ENCODE measurements at regions of chr17 and their contacts with region 1.

Region 1: DNA sequence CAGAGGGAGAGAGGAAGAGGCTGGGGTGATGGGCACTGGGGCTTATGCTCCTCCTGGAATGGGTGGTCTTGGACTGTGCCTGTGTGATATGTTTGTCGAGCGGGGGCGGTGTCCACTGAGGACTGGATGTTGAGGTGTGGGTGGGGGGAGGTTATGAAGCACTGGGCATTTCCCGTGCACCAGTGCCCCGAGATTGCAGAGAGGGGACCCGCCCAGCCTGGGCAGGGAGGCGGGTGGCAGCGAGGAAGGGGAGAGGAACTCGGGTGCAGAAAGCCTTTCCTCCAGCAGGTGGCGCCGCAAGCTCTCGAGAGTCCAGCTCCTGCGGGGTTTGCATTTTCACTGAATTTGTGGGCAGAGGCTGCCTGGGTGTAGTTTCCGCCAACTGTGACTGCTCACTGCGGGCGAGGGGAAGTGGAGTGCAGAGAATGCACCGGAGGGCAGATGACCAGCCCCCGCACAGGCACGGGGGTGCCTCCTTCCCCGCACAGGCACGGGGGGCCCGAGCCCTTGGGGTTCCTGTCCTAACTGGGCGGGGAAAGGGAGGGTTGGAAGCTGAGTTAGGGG is 190.6 kb downstream of the SEC14L1 start:
- DNase-seq: peak; percentile 92
- H3K4me3 Mint-ChIP-seq: peak overlapping the region; percentile 70
- H3K27ac Mint-ChIP-seq: peak overlapping the region; percentile 86
- H3K4me1 Mint-ChIP-seq: peaks cover 38% of the 10 kb centered on the region
- H3K27me3 Mint-ChIP-seq: no peaks in the 10 kb centered on the region

Region 2: DNA sequence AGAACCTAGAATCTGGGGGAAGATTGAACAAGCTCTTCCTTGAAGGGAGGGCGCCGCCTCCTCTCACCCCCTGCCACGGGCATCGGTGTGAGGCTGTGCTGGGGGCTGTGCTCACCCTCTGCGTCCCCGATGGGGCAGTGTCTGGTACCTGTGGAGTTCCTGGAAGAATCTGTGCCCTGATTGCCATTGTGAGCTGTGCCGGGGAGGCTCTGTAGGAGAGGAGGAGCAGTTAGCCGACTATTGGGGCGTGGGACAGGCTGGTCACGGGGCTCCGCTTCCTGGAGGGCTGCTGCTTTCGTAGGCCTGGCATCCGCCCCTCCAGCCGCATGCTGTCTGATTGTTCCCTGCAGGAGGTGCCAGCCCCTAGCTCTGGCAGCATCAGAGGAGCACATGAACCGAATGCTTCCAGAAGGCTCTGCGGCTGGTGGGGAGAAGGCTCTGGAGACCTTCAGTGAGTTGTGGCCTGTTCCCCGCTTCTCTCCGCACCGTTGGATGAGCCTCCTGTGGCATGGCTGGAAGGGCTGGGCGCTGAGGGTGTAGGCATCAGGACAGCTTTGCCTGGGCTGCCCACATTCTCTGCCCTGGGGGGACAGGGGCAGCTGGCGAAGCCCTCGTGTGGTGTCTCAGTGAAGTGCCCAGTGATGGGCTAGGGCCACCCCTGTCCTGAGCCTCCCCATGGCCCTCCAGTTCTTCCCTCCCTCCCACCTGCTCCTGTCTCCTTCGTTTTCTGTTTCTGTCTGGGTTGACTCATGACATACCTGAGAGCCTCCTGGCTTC is 103.7 kb before region 1 on chr17:
- intact Hi-C with region 1: no loop called
- DNase-seq: no peak
- H3K4me3 Mint-ChIP-seq: no peak overlapping the region
- H3K27ac Mint-ChIP-seq: no peak overlapping the region
- H3K4me1 Mint-ChIP-seq: no peaks in the 10 kb centered on the region
- H3K27me3 Mint-ChIP-seq: no peaks in the 10 kb centered on the region

Region 3: DNA sequence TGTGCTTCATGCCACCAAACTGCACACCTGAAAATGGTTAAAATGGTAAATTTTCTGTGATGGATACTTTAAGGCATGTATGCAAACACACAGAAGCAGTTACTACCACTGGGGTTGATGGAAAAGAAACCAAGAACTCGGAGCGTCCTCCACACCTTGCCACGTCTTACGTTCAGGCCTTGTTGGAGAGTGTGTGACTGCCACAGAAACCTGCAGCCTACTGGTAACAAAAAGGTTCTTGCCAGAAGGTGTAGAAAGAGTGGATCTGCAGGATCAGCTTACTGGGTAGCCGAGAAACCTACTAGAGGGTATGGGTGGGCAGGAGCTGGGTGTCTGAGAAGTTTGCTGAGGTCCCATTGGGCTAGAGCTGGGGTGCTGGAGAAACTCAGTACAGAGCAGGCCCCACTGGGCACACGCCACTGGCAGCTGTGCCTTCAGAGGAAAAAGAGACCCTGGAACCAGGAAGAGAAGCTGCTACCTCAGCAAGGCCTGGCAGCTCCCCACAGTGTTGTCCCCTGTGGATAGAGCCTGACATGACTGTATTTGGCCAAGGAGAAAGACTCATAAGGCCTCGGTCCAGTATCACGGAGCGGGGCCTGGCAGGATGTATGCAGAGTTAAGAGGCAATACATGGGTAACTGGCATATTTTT is 14.0 kb after region 1 on chr17:
- intact Hi-C with region 1: loop called (anchors 1 kb)
- DNase-seq: no peak
- H3K4me3 Mint-ChIP-seq: no peak overlapping the region
- H3K27ac Mint-ChIP-seq: no peak overlapping the region
- H3K4me1 Mint-ChIP-seq: peaks cover 36% of the 10 kb centered on the region
- H3K27me3 Mint-ChIP-seq: no peaks in the 10 kb centered on the region

Region 4: GRCh38 chr17:77391668-77392375 is 60.4 kb after region 1 on chr17:
- intact Hi-C with region 1: loop called (anchors 1 kb)
- DNase-seq: peak; percentile 56
- H3K4me3 Mint-ChIP-seq: peak overlapping the region; percentile 67
- H3K27ac Mint-ChIP-seq: peak overlapping the region; percentile 84
- H3K4me1 Mint-ChIP-seq: peaks cover 63% of the 10 kb centered on the region
- H3K27me3 Mint-ChIP-seq: no peaks in the 10 kb centered on the region

Region 5: DNA sequence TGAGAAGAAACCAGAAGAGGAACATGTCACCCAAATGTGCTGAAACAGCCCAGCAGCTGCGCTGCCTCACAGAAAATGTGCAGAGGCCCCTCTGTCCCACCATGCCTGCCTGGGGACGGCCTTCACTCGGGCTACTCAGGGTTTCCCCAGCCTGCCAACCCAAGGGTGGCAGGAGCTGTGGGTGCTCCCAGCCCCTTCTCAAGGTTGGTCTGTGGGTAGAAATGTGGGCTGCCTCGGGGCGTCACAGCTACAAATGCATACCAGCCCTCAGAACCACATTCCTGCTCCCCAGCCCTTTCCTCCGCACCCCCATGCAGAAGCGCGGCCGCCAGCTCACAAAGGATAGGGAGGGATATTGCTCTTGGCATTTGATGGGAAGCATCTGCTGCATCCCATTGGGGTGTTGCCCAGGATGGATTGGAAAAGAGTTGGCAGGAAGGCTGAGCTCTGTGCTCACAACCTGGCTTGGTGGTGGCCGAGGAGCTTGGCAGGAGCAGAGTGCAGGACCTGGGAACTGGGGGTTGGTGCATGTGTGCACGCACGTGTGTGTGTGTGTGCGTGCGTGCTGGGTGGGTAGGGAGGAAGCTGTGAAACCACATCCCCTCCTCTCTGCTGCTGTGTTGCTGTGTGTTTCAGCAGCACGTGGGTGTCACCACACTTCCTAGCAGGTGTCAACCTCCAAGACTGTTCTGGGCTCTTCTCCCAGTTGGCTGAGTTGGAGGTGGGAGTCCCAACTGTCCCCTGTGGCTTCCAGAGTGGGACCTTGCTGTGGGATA is 113.8 kb after region 1 on chr17:
- intact Hi-C with region 1: loop called (anchors 2 kb)
- DNase-seq: peak; percentile 85
- H3K4me3 Mint-ChIP-seq: peak overlapping the region; percentile 77
- H3K27ac Mint-ChIP-seq: peak overlapping the region; percentile 99
- H3K4me1 Mint-ChIP-seq: peaks cover 84% of the 10 kb centered on the region
- H3K27me3 Mint-ChIP-seq: no peaks in the 10 kb centered on the region

Region 6: GRCh38 chr17:77494664-77495435 is 163.5 kb after region 1 on chr17:
- intact Hi-C with region 1: loop called (anchors 1 kb)
- DNase-seq: peak; percentile 56
- H3K4me3 Mint-ChIP-seq: no peak overlapping the region
- H3K27ac Mint-ChIP-seq: peak overlapping the region; percentile 31
- H3K4me1 Mint-ChIP-seq: peaks cover 12% of the 10 kb centered on the region
- H3K27me3 Mint-ChIP-seq: no peaks in the 10 kb centered on the region

Measured in activated T-helper 2 cell treated with anti-CD3 and anti-CD28 coated beads, Interferon-gamma antibody, Interleukin-2, Interleukin-4, amounts not matched to agents 10 μg/mL and 5 μg/mL and 100 μg/mL, durations not matched to agents 14 hours and 24 hours and 36 hours (primary cell).